Activated B cell treated with CpG ODN at 0.5 μM for 24 hours (primary cell): ENCODE measurements at regions of chr14 and their contacts with region 1.

Region 1: DNA sequence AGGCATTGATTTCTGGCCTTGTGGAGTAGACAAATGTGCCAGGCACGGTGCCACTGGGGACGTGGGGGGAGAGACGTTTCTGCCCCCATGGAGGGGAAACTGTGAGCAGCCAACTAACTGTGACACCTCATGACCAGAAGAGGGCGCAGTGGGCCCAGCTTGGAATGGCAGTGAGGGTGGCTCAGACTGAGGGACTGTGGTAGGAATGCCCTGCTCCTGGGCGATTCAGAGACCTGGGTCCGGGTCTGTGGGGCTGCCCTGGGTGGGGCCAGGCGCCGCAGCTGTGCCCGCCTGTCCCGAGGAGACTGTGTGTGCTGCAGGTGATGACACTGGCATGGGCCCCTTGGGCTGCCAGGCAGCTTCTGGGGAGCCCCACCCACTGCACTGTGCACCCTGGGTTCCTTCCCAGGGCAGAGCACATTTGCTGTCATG is 60.6 kb downstream of the SLC25A47 start:
- DNase-seq: peak; percentile 41
- ATAC-seq: peak; percentile 74
- H3K4me3 Mint-ChIP-seq: no peak overlapping the region
- H3K27ac Mint-ChIP-seq: no peak overlapping the region
- H3K4me1 Mint-ChIP-seq: no peaks in the 10 kb centered on the region
- H3K27me3 Mint-ChIP-seq: no peaks in the 10 kb centered on the region
- CTCF ChIP-seq: no peak

Region 2: DNA sequence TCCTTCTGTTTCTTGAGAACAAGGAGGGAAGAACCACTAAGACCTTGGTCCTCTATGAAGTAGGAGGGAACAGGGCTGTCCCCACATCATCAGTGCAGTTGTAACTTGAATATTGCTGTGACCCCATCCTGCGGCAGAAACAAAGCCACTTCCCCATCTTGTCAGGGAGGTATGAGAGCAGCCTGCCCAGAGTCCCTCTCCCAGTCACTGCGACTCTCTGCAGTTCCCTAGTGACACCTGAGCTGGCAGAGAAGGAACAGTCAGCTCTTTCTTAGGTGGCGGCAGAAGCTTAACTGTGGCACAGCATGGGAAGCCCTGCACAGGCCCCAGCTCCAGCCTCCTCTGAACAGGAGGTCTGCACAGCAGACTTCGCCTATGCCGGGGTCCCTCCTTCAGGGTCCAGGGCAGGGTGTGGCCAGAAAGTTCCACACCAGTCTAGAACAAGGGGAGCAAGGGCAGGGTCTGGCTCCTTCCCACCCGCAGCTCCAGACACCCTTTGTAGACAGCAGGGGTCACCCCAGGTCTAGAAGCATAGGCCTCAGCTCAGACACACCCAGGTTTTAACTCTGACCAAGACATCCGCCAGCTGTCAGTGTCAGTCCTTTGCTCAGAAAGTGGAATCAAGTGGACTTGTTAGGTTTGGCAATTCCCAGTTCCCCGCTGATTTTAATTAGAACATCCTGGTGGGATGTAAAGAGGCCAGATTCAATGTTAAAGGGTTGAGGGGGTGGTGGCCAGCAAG is 261.1 kb before region 1 on chr14:
- CTCF ChIA-PET with region 1: no interaction called
- POLR2A ChIA-PET with region 1: no interaction called
- intact Hi-C with region 1: no loop called
- DNase-seq: no peak
- ATAC-seq: no peak
- H3K4me3 Mint-ChIP-seq: no peak overlapping the region
- H3K27ac Mint-ChIP-seq: no peak overlapping the region
- H3K4me1 Mint-ChIP-seq: peaks cover 15% of the 10 kb centered on the region
- H3K27me3 Mint-ChIP-seq: no peaks in the 10 kb centered on the region
- CTCF ChIP-seq: no peak

Region 3: GRCh38 chr14:100645192-100645990 is 261.6 kb after region 1 on chr14:
- CTCF ChIA-PET with region 1: interaction called, 5 read pairs
- POLR2A ChIA-PET with region 1: no interaction called
- intact Hi-C with region 1: loop called (anchors 1 kb)
- DNase-seq: no peak
- ATAC-seq: peak; percentile 52
- H3K4me3 Mint-ChIP-seq: no peak overlapping the region
- H3K27ac Mint-ChIP-seq: no peak overlapping the region
- H3K4me1 Mint-ChIP-seq: peaks cover 4% of the 10 kb centered on the region
- H3K27me3 Mint-ChIP-seq: peaks cover 12% of the 10 kb centered on the region
- CTCF ChIP-seq: no peak

Region 4: DNA sequence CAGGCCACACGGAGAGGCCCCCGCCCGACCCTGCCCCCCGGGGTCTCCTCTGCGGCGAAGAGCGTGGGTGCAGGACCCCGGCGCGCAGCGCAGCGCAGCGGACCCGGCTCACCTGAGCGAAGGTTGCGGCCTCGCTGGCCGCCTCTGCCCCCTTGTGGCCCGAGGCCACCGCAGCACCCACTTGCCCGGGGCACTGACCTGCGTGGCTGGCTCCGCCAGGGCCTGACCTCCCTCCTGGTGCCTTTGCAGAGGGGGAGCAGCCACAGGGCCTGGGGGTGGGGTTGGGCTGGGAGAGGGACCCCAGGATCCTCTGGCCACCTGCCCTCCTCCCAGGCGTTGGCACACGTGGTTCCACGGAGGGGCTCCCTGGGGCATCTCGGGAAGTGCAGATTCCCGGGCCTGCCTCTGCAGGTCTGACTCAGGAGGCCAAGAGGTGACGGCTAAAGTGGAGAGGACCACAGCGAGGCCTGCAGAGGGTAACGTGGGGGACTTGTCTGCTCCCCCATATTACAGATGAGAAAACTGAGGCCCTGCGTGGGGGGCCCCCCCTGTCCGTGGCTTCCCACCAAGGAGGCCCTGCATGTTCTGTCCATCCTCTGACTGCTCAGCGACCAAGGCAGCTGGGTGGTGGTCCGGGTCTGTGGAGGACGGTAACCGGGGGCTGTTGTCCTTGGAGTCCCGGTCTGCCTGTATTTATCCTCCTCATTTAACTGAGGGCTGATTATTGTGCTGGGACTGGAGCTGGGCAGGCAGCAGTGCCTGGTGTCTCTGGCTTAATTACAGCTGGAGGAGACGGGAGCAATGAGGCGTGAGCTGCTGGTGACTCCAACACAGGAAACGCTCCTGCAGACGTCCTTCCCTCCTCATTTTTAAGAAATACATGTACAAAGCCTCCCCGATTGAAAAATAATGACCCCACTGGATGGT is 271.3 kb after region 1 on chr14:
- CTCF ChIA-PET with region 1: interaction called, 4 read pairs
- POLR2A ChIA-PET with region 1: no interaction called
- intact Hi-C with region 1: loop called (anchors 2 kb)
- DNase-seq: no peak
- ATAC-seq: peak; percentile 49
- H3K4me3 Mint-ChIP-seq: no peak overlapping the region
- H3K27ac Mint-ChIP-seq: no peak overlapping the region
- H3K4me1 Mint-ChIP-seq: peaks cover 8% of the 10 kb centered on the region
- H3K27me3 Mint-ChIP-seq: peaks cover 16% of the 10 kb centered on the region
- CTCF ChIP-seq: no peak